ENCODE measurements at regions of chr19 and their contacts with region 1.

Region 1: DNA sequence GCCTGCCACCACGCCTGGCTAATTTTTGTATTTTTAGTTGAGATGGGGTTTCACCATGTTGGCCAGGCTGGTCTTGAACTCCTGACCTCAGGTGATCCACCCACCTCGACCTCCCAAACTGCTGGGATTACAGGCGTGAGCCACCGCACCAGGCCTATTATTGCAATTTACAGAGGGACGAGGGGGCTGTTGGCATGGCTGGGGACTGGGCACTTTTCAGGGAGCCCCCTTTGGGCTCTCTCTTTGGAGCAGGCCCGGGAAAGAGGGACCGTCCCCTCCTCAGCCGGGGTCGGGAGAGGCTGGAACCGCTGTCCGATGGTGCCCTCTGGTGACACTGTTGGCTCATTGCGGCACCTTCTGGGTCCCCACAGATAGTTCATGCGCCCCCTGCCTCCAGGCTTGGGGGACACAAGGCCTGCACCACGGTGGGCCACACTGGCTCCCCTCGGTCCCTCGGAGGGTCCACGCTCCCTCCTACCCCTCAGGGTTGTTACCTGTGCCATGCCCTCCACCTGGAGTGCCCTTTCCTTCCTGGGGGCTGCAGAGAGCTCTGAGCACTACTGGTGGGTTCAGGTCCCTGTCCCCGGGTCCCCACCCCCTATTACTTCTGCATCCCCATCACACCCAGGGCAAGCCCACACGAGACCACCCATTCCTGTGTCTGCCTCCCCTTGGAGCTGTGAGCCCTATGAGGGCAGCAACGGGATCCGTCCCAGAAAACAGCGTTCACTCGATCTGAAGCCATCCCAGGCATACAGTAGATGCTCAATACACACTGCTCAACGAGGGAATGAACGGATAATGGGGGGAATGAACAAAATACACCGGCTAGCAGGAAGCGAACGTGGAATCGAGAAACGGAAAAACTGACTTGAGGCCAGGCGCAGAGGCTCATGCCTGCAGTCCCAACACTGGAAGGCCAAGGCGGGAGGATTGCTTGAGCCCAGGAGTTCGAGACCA is 12.5 kb downstream of the FEM1A start:
- DNase-seq: peak; percentile 52 to 84
- ATAC-seq: peak; percentile 83 to 97 (median 96)
- H3K4me3 ChIP-seq: no peak overlapping the region
- H3K4me3 Mint-ChIP-seq: no peak overlapping the region
- H3K27ac ChIP-seq: no peak overlapping the region
- H3K27ac Mint-ChIP-seq: no peak overlapping the region
- H3K4me1 ChIP-seq: peaks cover 3% of the 10 kb centered on the region
- H3K4me1 Mint-ChIP-seq: no peaks in the 10 kb centered on the region
- H3K27me3 ChIP-seq: no peaks in the 10 kb centered on the region
- H3K27me3 Mint-ChIP-seq: no peaks in the 10 kb centered on the region
- CTCF ChIP-seq: peak; percentile 62

Region 2: GRCh38 chr19:4576016-4576933 is 227.7 kb before region 1 on chr19:
- intact Hi-C with region 1: loop called (anchors 10 kb)
- DNase-seq: peak; percentile 62 to 77
- ATAC-seq: peak; percentile 62 to 76 (median 71)
- H3K4me3 ChIP-seq: no peak overlapping the region
- H3K4me3 Mint-ChIP-seq: no peak overlapping the region
- H3K27ac ChIP-seq: no peak overlapping the region
- H3K27ac Mint-ChIP-seq: no peak overlapping the region
- H3K4me1 ChIP-seq: peaks cover 4% of the 10 kb centered on the region
- H3K4me1 Mint-ChIP-seq: peaks cover 0 to 3% of the 10 kb centered on the region in 2 donors
- H3K27me3 ChIP-seq: peaks cover 14% of the 10 kb centered on the region
- H3K27me3 Mint-ChIP-seq: peaks cover 21 to 32% of the 10 kb centered on the region in 2 donors
- CTCF ChIP-seq: peak; percentile 67

Region 3: GRCh38 chr19:4861077-4861543 is 57.1 kb after region 1 on chr19:
- intact Hi-C with region 1: no loop called
- DNase-seq: no peak
- ATAC-seq: no peak
- H3K4me3 ChIP-seq: no peak overlapping the region
- H3K4me3 Mint-ChIP-seq: no peak overlapping the region
- H3K27ac ChIP-seq: no peak overlapping the region
- H3K27ac Mint-ChIP-seq: no peak overlapping the region
- H3K4me1 ChIP-seq: peaks cover 3% of the 10 kb centered on the region
- H3K4me1 Mint-ChIP-seq: no peaks in the 10 kb centered on the region
- H3K27me3 ChIP-seq: no peaks in the 10 kb centered on the region
- H3K27me3 Mint-ChIP-seq: no peaks in the 10 kb centered on the region
- CTCF ChIP-seq: no peak

Measured in natural killer cell (primary cell).